A673 (cell line): ENCODE measurements at regions of chr11 and their contacts with region 1.

Region 1: DNA sequence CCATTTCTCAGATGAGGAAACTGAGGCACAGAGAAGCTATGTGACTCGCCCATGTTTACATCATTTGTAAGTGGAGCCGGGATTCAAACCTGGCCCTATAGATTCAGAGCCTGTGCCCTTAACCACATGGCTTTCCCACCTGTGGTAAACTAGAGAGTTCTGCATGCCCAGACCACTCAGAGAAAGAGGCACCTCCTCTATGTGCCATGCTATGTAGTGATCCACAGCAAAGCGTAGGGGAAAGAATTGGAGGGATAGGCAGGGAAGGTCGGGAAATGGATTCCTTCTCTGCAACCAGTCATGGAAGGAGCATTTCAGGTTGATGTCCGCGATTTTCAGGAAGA is 15.4 kb upstream of the POU2AF2 start:
- DNase-seq: no peak
- H3K4me3 ChIP-seq: peak overlapping the region; percentile 49
- H3K27ac ChIP-seq: peak overlapping the region; percentile 62
- H3K4me1 ChIP-seq: peaks cover 11% of the 10 kb centered on the region
- H3K27me3 ChIP-seq: no peaks in the 10 kb centered on the region
- CTCF ChIP-seq: no peak

Region 2: DNA sequence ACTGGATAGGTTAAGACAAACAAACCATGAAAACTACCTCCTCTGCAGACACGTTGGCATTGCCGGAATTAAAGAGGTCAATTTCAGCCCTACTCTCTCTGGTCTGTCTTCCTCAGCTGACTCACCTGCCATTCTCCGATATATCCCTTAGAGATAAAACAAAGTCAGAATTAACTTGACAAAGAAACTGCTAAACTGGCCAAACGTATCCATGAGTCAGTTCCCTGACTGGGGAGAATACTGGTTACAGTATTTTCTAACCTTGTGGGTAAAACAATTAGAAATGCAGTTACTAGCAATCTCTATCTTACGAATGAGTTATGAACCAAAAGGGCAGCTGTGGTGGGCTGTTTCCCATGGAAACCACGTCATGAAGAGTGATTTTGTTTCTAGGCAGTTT is 1029.9 kb before region 1 on chr11:
- CTCF ChIA-PET with region 1: interaction called, 6 read pairs
- POLR2A ChIA-PET with region 1: no interaction called
- intact Hi-C with region 1: loop called (anchors 5 kb)
- DNase-seq: no peak
- H3K4me3 ChIP-seq: no peak overlapping the region
- H3K27ac ChIP-seq: peak overlapping the region; percentile 16
- H3K4me1 ChIP-seq: peaks cover 38% of the 10 kb centered on the region
- H3K27me3 ChIP-seq: no peaks in the 10 kb centered on the region
- CTCF ChIP-seq: no peak

Region 3: DNA sequence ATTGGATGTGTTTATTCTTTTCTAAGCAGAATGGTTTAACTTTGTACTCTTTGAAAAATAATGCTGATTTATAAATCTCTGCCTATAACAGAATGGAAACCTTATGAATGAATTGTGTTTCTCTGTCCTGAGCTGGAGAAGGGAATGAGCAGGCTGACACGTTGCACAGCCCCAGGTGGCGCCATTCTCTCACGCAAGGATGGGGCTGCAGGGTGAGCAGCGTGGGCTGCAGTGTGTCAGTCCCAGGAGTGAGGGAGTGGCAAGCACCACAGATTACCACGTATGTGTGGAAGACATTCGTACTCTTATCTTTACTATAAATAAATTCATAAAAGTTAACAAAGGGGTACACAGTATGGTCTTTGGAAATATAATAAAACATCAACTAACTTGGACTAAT is 766.9 kb before region 1 on chr11:
- CTCF ChIA-PET with region 1: interaction called, 3 read pairs
- POLR2A ChIA-PET with region 1: no interaction called
- intact Hi-C with region 1: loop called (anchors 2 kb)
- DNase-seq: peak; percentile 87
- H3K4me3 ChIP-seq: no peak overlapping the region
- H3K27ac ChIP-seq: no peak overlapping the region
- H3K4me1 ChIP-seq: peaks cover 6% of the 10 kb centered on the region
- H3K27me3 ChIP-seq: no peaks in the 10 kb centered on the region
- CTCF ChIP-seq: peak; percentile 89

Region 4: GRCh38 chr11:110711776-110712658 is 518.1 kb before region 1 on chr11 and contains the start of gene ARHGAP20:
- CTCF ChIA-PET with region 1: no interaction called
- POLR2A ChIA-PET with region 1: interaction called, 7 read pairs
- intact Hi-C with region 1: loop called (anchors 1 kb)
- DNase-seq: peak; percentile 91
- H3K4me3 ChIP-seq: peak within 1 kb of the TSS; percentile 76
- H3K27ac ChIP-seq: peak within 1 kb of the TSS; percentile 52
- H3K4me1 ChIP-seq: no peaks in the 10 kb centered on the region
- H3K27me3 ChIP-seq: no peaks in the 10 kb centered on the region
- CTCF ChIP-seq: no peak
- total RNA-seq, gene ARHGAP20: 7.9 and 8.4 TPM in 2 replicates

Region 5: DNA sequence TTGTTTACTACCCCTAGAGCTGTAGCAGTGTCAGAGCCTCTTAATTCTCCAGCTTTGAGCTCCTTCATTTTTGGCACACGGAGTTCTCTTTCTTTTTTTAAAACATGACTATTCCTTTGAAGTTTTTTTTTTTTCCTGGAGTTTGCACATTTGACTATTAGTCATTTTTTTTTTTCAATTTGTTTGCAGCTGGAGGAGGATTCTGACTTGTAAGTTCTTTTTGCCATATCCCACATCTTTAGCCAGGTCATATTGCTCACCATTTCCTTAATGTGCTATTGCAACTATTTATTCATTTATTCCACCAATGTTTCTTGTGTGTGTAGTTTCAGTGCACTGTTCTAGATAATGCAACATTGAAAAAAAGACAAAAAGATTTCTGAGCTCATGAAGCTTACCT is 351.6 kb before region 1 on chr11:
- CTCF ChIA-PET with region 1: no interaction called
- POLR2A ChIA-PET with region 1: no interaction called
- intact Hi-C with region 1: no loop called
- DNase-seq: no peak
- H3K4me3 ChIP-seq: no peak overlapping the region
- H3K27ac ChIP-seq: no peak overlapping the region
- H3K4me1 ChIP-seq: no peaks in the 10 kb centered on the region
- H3K27me3 ChIP-seq: no peaks in the 10 kb centered on the region
- CTCF ChIP-seq: no peak

Region 6: DNA sequence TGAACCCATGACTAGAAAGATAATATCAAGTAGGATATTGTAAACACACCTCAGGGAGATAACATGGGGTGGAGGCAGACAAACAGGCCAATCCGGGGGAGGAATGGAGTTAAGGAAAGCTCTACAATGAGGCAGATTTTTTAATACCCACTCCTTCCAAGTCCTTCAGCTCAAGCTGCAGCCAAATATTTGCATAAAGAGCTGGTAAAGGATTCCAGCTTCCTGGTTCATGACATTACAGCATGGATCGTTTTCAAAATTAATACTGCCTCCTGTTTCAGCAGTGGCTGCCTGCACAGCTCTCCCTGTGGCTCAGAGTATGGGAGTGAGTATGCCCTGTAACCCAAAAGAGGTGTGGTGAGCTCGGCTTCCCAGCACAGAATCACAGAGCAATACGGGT is 73.4 kb after region 1 on chr11:
- CTCF ChIA-PET with region 1: no interaction called
- POLR2A ChIA-PET with region 1: interaction called, 10 read pairs
- intact Hi-C with region 1: no loop called
- DNase-seq: peak; percentile 31
- H3K4me3 ChIP-seq: no peak overlapping the region
- H3K27ac ChIP-seq: no peak overlapping the region
- H3K4me1 ChIP-seq: peaks cover 27% of the 10 kb centered on the region
- H3K27me3 ChIP-seq: no peaks in the 10 kb centered on the region
- CTCF ChIP-seq: no peak